Ascending aorta (tissue), 2 donors: ENCODE measurements at regions of chr5 and their contacts with region 1.

Region 1: DNA sequence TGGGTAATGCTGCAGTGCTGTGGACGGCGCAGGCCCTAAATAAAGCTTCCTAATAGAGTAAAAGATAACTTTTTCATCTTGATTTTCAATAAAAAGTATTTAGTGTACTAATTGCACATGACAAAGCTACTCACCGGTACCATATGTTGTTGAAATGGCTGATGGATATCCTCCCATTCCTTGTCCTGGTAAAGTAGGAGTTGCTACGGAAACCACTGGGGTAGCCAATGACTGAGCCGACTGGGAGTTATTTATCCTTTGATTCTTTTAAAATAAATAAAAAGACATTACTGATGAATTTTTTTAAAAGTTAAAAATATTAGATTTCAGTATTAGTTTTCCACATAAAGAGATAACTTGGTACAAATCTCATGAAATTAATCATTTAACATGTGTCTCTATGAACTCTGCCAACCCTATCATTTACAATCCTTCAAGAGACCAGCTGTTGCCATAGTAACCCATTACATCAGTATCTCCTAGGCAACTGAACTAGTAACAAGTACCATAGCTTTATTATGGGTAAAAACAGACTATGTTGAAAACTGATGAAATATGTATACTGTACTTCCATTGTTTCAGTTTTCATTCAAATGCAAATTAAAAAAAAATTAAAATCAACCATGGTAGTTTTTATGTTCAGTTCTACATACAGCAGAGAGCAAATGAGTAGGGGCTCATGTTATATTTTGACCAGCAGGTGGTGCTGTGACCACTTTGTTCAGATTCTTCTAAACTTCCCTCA is 153.7 kb downstream of the MEF2C start:
- DNase-seq: peak in 1 of 2 donors; percentile 86
- H3K4me3 ChIP-seq: no peak overlapping the region
- H3K27ac ChIP-seq: peak overlapping the region in 1 of 2 donors; percentile 82
- H3K4me1 ChIP-seq: peaks cover 11 to 35% of the 10 kb centered on the region in 2 donors
- H3K27me3 ChIP-seq: no peaks in the 10 kb centered on the region
- CTCF ChIP-seq: peak; percentile 61 to 74 (median 70)

Region 2: GRCh38 chr5:88833371-88834130 is 104.3 kb after region 1 on chr5:
- intact Hi-C with region 1: loop called (anchors 2 kb)
- DNase-seq: peak; percentile 29 to 89
- H3K4me3 ChIP-seq: peak overlapping the region; percentile 28 to 50
- H3K27ac ChIP-seq: peak overlapping the region; percentile 88 to 91
- H3K4me1 ChIP-seq: peaks cover 3 to 52% of the 10 kb centered on the region in 2 donors
- H3K27me3 ChIP-seq: no peaks in the 10 kb centered on the region
- CTCF ChIP-seq: no peak

Region 3: DNA sequence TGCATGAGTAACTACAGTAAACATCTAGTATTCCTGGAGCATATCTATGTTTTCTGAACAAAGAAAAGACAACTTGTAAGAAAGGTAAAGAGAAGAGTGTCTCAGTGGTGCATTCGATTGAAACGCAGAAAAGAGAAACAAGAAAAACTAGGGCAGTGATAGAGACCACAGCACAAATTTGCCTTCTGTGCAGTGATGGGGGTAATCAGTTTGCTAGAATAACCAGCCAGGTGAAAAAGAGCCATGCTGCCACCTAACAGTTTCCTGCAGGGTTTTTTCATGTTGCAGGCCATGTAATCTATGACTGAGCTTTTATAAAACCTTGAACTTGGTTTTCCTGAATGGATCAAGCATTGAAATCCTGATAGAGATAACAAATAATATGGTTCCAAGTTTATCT is 352.1 kb after region 1 on chr5:
- intact Hi-C with region 1: loop called (anchors 10 kb)
- DNase-seq: no peak
- H3K4me3 ChIP-seq: no peak overlapping the region
- H3K27ac ChIP-seq: no peak overlapping the region
- H3K4me1 ChIP-seq: no peaks in the 10 kb centered on the region
- H3K27me3 ChIP-seq: no peaks in the 10 kb centered on the region
- CTCF ChIP-seq: no peak

Region 4: GRCh38 chr5:89303033-89303480 is 573.8 kb after region 1 on chr5:
- intact Hi-C with region 1: no loop called
- DNase-seq: no peak
- H3K4me3 ChIP-seq: no peak overlapping the region
- H3K27ac ChIP-seq: no peak overlapping the region
- H3K4me1 ChIP-seq: no peaks in the 10 kb centered on the region
- H3K27me3 ChIP-seq: no peaks in the 10 kb centered on the region
- CTCF ChIP-seq: no peak

Region 5: GRCh38 chr5:89457411-89458331 is 728.4 kb after region 1 on chr5:
- intact Hi-C with region 1: loop called (anchors 5 kb)
- DNase-seq: peak; percentile 9 to 86
- H3K4me3 ChIP-seq: no peak overlapping the region
- H3K27ac ChIP-seq: peak overlapping the region; percentile 75 to 78
- H3K4me1 ChIP-seq: peaks cover 4 to 13% of the 10 kb centered on the region in 2 donors
- H3K27me3 ChIP-seq: no peaks in the 10 kb centered on the region
- CTCF ChIP-seq: no peak

Region 6: DNA sequence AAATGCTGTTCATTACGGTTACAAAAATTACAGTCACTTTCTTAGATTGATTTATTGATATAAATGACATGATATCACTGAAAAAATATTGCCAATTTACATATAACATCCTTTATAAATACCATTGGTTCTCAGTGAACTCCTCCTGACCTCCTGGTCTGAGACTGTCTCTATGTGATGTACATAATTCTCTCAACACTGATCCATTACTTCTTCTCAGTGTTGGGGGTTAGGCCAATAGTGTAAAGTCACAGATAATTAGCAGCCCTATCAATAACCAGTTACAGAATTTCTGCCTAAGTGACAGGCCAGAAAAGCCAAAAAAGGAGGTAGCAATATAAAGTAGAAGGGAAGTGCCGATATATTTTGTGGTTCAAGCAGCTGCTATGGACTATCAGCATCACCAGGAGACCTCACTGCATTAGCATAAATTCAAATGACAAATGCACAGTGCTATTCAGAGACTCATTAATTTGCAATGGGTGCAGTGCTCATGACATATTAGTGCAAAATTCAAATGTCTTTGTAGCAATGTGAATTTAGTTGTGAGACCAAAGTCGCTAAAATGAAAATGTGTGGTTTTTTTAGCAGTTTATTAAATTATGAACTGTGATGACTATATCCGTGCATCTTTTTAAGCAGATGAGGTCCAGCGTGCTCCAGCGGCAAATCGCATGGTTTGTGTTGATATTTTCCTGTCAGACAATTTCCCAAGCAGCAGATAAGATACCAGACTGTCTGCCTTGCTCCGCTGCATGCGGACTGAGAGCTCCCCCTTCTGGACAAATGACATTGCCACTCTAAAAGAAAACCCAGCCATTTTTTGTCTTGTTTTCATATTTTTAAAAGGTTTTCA is 1535.7 kb after region 1 on chr5:
- intact Hi-C with region 1: loop called (anchors 2 kb)
- DNase-seq: peak in 1 of 2 donors; percentile 71
- H3K4me3 ChIP-seq: peak overlapping the region in 1 of 2 donors; percentile 29
- H3K27ac ChIP-seq: no peak overlapping the region
- H3K4me1 ChIP-seq: peaks cover 0 to 12% of the 10 kb centered on the region in 2 donors
- H3K27me3 ChIP-seq: no peaks in the 10 kb centered on the region
- CTCF ChIP-seq: peak; percentile 75 to 94 (median 92)